Activated naive CD4-positive, alpha-beta T cell treated with anti-CD3 and anti-CD28 coated beads, Interleukin-2, amount 10 ng/mL, durations not matched to agents 7 days and 5 days (primary cell): ENCODE measurements at regions of chr7 and their contacts with region 1.

Region 1: DNA sequence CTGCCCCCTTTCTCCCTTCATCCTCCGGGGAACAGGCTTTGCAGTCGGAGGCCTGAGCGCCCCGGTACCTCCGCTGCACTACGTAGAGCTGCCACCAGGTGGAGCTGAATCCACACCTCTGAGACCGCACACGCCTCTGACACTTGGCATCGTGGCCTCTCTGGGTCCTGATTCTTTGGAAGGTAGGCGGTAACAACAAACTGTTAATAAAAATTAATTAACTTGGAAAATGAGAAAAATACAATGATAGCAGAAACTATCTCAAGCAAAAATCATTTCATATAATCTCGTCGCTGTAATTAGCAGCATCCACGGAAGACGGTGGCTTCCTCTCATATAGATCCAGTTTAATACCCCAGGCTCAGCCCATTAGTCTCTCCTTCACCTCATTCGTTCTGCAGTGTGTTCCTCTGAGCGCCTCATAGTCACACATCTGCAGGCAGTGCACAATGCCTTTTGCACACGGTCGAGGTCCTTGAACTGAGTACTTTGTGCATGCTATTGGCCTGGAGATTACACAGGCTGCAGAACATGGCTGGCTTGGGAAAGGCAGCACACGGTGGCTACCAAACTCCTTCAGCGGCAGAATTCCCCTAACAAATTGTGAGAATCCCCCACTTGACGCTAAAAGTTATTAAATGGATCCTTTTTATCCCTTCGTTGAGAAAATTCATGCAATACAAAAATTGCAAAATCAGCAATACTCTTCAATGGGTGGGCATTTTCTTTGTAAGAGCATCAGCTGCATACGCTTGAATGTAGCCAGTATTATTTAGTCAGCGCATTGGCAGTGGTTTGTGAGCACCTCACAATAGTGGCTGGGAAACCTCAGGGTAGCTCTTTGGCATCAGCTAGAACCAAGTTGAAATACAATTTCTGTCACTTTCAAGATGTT is 18.7 kb downstream of the OR9A2 start:
- DNase-seq: peak; percentile 84
- H3K4me3 Mint-ChIP-seq: no peak overlapping the region
- H3K27ac Mint-ChIP-seq: no peak overlapping the region
- H3K4me1 Mint-ChIP-seq: peaks cover 4% of the 10 kb centered on the region
- H3K27me3 Mint-ChIP-seq: peaks cover 27% of the 10 kb centered on the region

Region 2: GRCh38 chr7:142603870-142604448 is 404.3 kb before region 1 on chr7:
- CTCF ChIA-PET with region 1: interaction called, 24 read pairs
- DNase-seq: peak; percentile 68
- H3K4me3 Mint-ChIP-seq: peak overlapping the region; percentile 35
- H3K27ac Mint-ChIP-seq: no peak overlapping the region
- H3K4me1 Mint-ChIP-seq: peaks cover 18% of the 10 kb centered on the region
- H3K27me3 Mint-ChIP-seq: peaks cover 26% of the 10 kb centered on the region

Region 3: GRCh38 chr7:142703655-142704305 is 304.5 kb before region 1 on chr7:
- CTCF ChIA-PET with region 1: no interaction called
- DNase-seq: no peak
- H3K4me3 Mint-ChIP-seq: no peak overlapping the region
- H3K27ac Mint-ChIP-seq: no peak overlapping the region
- H3K4me1 Mint-ChIP-seq: peaks cover 38% of the 10 kb centered on the region
- H3K27me3 Mint-ChIP-seq: no peaks in the 10 kb centered on the region

Region 4: GRCh38 chr7:142873281-142873787 is 134.9 kb before region 1 on chr7:
- CTCF ChIA-PET with region 1: interaction called, 27 read pairs
- DNase-seq: peak; percentile 56
- H3K4me3 Mint-ChIP-seq: no peak overlapping the region
- H3K27ac Mint-ChIP-seq: no peak overlapping the region
- H3K4me1 Mint-ChIP-seq: no peaks in the 10 kb centered on the region
- H3K27me3 Mint-ChIP-seq: peaks cover 19% of the 10 kb centered on the region

Region 5: GRCh38 chr7:142901426-142902259 is 106.6 kb before region 1 on chr7:
- CTCF ChIA-PET with region 1: no interaction called
- DNase-seq: no peak
- H3K4me3 Mint-ChIP-seq: no peak overlapping the region
- H3K27ac Mint-ChIP-seq: no peak overlapping the region
- H3K4me1 Mint-ChIP-seq: no peaks in the 10 kb centered on the region
- H3K27me3 Mint-ChIP-seq: peaks cover 30% of the 10 kb centered on the region

Region 6: GRCh38 chr7:142992464-142992863 is 15.8 kb before region 1 on chr7:
- CTCF ChIA-PET with region 1: interaction called, 11 read pairs
- DNase-seq: no peak
- H3K4me3 Mint-ChIP-seq: no peak overlapping the region
- H3K27ac Mint-ChIP-seq: no peak overlapping the region
- H3K4me1 Mint-ChIP-seq: no peaks in the 10 kb centered on the region
- H3K27me3 Mint-ChIP-seq: peaks cover under 1% of the 10 kb centered on the region

Region 7: DNA sequence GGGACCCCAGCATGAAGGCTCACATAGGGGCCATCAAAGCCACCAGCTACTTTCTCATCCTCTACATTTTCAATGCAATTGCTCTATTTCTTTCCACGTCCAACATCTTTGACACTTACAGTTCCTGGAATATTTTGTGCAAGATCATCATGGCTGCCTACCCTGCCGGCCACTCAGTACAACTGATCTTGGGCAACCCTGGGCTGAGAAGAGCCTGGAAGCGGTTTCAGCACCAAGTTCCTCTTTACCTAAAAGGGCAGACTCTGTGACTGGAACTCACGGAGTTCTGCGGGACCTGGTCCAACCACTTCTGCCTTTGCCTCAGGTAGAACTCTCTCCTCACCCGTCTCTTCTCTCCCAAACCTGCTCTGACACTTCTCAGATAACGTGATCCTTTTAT is 214.5 kb after region 1 on chr7:
- CTCF ChIA-PET with region 1: interaction called, 206 read pairs
- DNase-seq: no peak
- H3K4me3 Mint-ChIP-seq: no peak overlapping the region
- H3K27ac Mint-ChIP-seq: no peak overlapping the region
- H3K4me1 Mint-ChIP-seq: no peaks in the 10 kb centered on the region
- H3K27me3 Mint-ChIP-seq: peaks cover 48% of the 10 kb centered on the region

Region 8: DNA sequence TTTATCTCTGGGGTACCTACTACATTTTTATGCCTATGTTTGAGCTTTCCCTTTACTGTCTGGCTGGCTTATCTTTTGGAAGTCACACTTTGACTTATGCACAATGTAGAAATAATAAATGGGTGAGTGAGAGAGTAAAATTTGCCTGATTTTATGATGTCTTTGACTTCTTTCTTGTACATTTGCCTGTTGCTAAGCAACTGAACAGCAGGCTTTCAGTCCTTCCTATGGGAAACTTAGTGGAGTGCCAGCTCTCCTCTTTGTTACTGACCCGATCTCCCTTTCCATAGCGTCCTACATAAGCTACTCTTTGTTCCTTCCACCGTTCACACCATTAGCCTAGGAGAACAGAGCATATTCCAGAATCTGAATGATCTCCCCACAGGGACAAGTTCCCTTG is 439.2 kb after region 1 on chr7:
- CTCF ChIA-PET with region 1: no interaction called
- DNase-seq: no peak
- H3K4me3 Mint-ChIP-seq: no peak overlapping the region
- H3K27ac Mint-ChIP-seq: no peak overlapping the region
- H3K4me1 Mint-ChIP-seq: no peaks in the 10 kb centered on the region
- H3K27me3 Mint-ChIP-seq: no peaks in the 10 kb centered on the region